T-cell (primary cell): ENCODE measurements at regions of chr1 and their contacts with region 1.

Region 1: DNA sequence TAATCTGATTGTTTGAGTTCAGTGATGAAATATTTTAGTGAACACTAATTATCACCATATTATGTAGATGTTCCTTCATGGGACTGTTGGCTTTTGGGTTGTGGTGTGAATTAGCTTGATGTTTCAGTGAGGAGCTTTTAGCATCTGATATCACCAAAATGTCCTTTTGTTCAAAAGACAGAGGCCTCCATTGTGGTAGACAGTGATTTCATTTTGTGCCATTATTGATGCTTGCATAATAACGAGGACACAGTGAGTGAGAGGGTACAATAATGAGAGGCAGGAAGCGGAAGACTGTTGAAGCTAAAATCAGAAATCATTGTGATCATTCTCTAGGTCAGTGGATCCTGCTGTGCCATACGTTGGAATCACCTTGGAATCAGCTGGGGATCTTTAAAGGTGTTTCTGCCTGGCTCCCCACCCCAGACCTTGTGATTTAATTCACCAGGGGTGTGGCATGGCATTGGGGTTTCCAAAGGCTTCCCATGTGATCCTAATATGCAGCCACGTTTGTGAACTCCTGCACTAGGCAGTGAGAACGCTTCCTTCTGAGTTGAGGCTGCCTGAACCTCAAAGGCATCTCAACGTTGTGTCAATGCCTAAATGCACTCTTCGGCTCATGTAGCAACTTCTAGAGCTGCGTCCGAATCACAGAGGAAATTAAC is 82.1 kb upstream of the KIF1B start:
- DNase-seq: no peak
- ATAC-seq: no peak
- H3K4me3 ChIP-seq: no peak overlapping the region
- H3K4me3 Mint-ChIP-seq: no peak overlapping the region
- H3K27ac ChIP-seq: no peak overlapping the region
- H3K27ac Mint-ChIP-seq: no peak overlapping the region
- H3K4me1 ChIP-seq: no peaks in the 10 kb centered on the region
- H3K4me1 Mint-ChIP-seq: no peaks in the 10 kb centered on the region
- H3K27me3 ChIP-seq: no peaks in the 10 kb centered on the region
- H3K27me3 Mint-ChIP-seq: no peaks in the 10 kb centered on the region

Region 2: DNA sequence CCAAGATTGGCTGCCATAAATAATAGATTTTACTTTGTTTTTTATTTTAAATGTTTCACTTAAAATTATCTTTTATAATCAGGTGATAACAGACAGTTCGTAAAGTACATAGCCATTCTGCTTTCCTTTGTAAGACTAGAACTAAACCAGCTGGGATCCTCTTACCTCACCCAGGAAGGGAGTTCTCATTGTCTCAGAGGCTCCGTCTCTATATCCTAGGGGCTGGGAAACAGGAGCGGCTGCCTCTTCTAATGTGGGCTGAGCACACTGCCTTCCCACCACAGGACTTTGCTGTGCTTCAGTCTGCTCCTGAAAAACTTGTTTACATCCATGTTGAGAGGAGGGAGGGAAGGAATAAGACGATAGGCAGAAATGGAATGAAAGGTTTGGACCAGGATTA is 225.0 kb after region 1 on chr1:
- CTCF ChIA-PET with region 1: no interaction called
- POLR2A ChIA-PET with region 1: interaction called in 1 of 2 experiments, 13 read pairs
- DNase-seq: no peak
- ATAC-seq: no peak
- H3K4me3 ChIP-seq: no peak overlapping the region
- H3K4me3 Mint-ChIP-seq: no peak overlapping the region
- H3K27ac ChIP-seq: no peak overlapping the region
- H3K27ac Mint-ChIP-seq: no peak overlapping the region
- H3K4me1 ChIP-seq: no peaks in the 10 kb centered on the region
- H3K4me1 Mint-ChIP-seq: no peaks in the 10 kb centered on the region
- H3K27me3 ChIP-seq: no peaks in the 10 kb centered on the region
- H3K27me3 Mint-ChIP-seq: no peaks in the 10 kb centered on the region